ENCODE measurements at regions of chr3 and their contacts with region 1.

Region 1: DNA sequence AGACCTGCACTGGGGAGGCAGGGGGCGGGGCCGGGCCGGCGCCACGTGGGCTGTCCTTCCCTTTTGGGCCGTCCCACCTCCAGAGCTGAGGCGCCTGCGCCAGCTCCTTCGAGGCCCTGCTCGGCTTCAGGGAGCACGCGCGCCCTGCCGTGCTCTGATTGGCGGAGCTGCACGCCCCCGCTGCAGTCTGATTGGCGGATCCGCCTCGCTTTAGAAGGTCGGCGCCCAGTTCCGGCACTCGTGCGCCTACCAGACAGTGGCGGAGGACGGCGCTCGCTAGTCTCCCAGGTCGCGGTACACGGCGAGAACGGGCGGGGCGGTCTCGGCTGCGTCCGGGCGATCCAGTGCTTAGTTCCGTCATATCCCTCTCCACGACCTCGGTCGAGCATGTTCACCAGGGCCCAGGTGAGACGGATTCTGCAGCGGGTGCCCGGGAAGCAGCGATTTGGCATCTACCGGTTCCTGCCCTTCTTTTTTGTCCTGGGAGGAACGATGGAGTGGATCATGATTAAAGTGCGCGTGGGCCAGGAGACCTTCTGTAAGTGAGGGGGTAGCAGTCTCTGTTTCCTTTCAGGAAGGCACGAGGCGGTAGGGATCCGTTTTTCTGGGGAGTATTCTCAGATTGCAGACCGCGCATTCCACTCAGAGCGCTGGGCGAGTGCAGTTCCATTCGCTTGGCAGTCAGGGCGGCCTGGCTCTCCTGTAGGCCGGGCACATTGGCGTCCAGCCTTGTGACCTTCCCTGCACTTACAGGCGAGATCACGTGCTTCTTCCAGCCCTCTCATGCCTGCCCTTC is at the start of gene UQCC5:
- DNase-seq: peak; percentile 99
- ATAC-seq: peak; percentile 94
- total RNA-seq, gene UQCC5: 71.1 TPM

Region 2: DNA sequence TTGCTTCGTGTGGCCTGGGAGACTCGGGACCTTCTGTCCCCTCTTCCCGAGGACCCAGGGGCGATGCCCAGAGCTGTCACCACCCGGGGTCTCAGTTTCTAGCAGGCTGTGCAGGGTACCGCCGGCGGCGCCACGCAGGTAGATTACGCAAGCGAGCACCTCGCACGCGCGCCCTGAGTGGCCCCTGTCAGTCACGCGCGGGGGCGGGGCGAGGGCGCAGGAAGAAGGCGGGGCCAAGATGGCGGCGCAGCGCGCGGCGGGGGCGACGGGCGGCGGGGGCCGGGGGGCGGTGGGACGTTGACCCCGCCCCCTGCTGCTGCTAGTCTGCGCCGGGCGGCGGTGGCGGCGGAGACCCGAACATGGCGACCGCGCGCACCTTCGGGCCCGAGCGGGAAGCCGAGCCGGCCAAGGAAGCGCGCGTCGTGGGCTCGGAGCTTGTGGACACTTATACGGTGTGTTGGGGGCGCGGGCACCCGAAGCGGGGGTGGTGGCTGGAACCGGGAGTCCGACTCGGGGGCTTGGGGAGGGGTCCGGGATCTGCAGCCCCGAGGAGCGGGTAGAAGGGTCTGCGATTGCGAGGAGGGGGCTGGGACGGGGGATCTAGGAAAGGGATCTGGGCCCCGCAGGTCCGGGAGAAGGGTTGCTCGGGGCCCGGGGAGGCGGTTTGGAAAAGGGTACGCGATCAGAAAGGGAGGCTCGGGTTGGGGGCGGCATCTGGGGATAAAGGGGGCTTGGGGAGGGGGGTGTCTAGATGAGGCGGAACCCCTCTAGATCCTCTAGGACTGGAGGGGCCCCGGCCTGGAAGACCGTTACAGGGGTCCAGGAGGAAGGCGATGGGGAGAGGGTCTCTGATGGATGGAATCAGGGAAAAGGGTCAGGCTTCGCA is 81.0 kb before region 1 on chr3 and contains the start of gene NISCH:
- intact Hi-C with region 1: loop called (anchors 5 kb)
- DNase-seq: peak; percentile 96
- ATAC-seq: peak; percentile 62
- total RNA-seq, gene NISCH: 45.6 TPM

Region 3: DNA sequence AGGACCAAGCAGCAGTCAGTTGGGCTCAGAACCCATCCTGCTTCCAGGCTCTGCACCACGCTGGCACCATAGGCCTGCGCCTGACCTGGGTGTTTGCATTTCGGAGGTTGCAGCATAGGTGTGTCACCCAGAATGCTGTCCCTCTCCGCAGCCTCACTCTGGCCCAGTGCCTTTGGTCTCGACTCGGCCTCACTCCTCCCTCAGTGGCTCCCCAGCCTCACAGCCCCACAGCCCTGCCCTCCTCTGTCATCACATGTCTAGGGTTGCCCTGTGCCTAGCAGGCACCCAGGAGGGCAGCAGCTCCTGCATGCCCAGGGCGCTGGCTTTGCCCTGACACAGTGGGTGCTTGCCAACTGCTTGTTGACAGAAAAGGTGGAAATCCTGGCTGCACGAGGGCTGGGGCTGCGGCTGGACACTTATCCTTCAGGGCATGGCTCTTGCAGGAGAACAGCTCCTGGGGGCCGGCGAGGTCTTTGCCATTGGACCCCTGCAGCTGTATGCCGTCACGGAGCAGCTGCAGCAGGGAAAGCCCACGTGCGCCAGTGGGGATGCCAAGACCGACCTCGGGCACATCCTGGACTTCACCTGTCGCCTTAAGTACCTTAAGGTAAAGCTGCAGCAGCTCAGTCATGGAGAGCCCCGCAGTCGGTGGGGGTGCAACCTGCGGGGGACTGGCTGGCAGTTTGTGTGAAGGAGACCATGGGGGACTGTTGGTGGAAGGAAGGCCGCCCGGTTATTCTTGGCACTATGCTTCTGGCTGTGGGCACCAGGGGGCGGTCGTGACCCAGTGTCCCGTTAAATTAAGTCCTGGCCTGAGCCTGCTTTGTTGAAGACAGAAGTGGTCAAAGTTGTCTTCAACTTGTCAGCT is 65.0 kb before region 1 on chr3:
- intact Hi-C with region 1: loop called (anchors 2 kb)
- DNase-seq: peak; percentile 89
- ATAC-seq: peak; percentile 83

Region 4: DNA sequence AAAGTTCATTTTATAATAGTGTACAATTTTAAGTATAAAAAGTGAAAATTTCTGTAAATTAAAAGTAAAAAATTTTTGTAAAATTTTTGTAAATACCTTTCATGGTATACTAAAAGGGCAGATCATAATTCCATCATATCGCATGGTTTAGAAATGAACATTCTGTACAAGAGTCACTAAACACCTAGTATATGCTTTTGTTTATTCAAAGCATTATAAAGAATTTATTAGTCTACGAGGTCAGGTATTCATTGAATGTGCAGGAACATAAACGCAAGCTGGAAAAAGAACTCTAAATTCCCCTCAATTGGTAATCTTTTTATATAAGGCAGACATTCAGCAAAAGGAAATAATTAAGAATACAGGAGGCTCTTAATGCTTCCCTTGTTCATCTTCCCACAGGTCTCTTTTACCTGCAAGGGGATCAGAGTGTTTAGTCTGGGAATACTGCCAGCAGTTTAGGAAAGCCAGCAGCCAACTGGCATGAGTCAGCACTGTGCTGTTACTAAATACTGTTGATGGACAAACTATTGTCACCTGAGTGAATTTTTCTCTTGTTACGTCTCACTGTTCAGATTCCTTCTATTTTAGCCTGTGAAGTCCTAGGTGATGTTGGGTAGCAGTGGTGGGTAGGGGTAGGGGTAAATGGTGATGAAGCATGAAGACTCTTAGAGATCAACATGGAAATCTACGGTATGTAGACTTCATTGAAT is 70.0 kb after region 1 on chr3:
- intact Hi-C with region 1: loop called (anchors 5 kb)
- DNase-seq: no peak
- ATAC-seq: peak; percentile 37

Measured in Right ventricle myocardium inferior (tissue), 1 donor.